A549 (cell line): ENCODE measurements at regions of chr7 and their contacts with region 1.

Region 1: DNA sequence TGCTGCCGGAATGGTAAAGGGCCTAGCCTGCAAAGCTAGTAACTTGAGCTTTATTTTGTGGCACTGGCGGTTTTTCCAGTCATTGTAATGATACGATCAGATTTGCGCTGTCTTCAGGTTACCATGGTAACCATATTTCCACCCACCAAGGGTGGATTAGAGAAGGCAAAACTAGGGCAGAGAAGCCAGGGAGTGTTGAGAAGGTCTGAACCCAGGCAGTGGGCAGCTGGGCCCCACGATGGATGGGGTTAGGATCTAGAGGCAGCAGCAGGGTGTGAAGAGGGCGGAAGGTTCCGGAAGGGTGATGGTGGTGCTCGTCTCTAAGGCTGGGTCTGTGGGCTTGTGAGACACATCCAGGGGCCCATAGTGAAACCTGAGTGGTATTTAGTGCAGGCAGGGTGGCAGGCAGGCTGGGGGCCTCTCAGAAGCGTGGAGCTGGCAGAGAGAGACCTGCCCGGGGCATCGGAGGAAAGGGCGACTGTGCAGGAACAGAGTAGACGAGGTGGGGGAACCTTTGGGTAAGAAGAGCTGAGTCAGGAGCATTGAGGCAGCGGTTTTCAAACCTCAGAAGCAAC is 87.9 kb upstream of the GTF2I start:
- DNase-seq: no peak
- ATAC-seq: no peak
- H3K4me3 ChIP-seq: no peak overlapping the region
- H3K27ac ChIP-seq: peak overlapping the region; percentile 71 to 82
- H3K4me1 ChIP-seq: peaks cover 30% of the 10 kb centered on the region
- CTCF ChIP-seq: no peak
- EP300 ChIP-seq: no peak
- POLR2A ChIP-seq: no peak
- RAD21 ChIP-seq: no peak

Region 2: GRCh38 chr7:74429153-74429747 is 140.3 kb before region 1 on chr7:
- CTCF ChIA-PET with region 1: interaction called, 10 read pairs
- POLR2A ChIA-PET with region 1: no interaction called
- DNase-seq: peak in 1 of 2 experiments; percentile 64
- ATAC-seq: peak; percentile 61 to 67
- H3K4me3 ChIP-seq: no peak overlapping the region
- H3K27ac ChIP-seq: peak overlapping the region; percentile 69 to 80
- H3K4me1 ChIP-seq: peaks cover 21% of the 10 kb centered on the region
- CTCF ChIP-seq: no peak
- EP300 ChIP-seq: no peak
- POLR2A ChIP-seq: no peak
- RAD21 ChIP-seq: no peak

Region 3: DNA sequence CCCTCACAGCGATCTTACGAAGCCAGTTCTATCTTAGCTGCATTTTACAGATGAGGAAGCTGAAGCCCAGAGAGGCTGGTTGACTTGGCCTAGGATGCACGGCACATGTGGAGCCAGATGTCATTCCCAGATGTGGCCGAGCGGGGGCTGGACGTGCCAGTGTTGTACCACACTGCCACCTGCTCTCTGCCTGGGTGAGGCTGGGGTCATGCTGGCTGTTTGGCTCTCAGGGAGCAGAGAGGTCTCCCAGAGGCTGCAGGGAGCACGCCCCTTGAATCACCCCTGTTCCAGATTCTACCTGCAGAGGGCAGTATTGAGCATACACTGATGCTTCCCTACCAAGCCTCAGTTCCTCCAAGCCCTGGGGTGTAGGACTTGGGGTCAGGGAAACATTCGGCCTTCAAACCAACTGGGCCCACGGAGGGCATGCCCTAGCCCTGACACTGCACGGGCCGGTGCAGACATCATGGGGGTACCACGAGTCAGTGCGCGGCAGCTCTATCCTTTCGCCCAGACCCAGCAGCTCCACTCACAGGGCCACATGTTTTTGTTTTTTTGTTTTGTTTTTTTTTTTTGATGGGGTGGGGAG is 119.7 kb before region 1 on chr7:
- CTCF ChIA-PET with region 1: interaction called, 18 read pairs
- POLR2A ChIA-PET with region 1: no interaction called
- DNase-seq: peak; percentile 68 to 76
- ATAC-seq: peak; percentile 56 to 68; a peak in 4 of 6 replicates
- H3K4me3 ChIP-seq: no peak overlapping the region
- H3K27ac ChIP-seq: peak overlapping the region; percentile 30 to 42; a peak in 4 of 6 replicates
- H3K4me1 ChIP-seq: peaks cover 10% of the 10 kb centered on the region
- CTCF ChIP-seq: peak; percentile 70
- EP300 ChIP-seq: no peak
- POLR2A ChIP-seq: no peak
- RAD21 ChIP-seq: peak; percentile 65 to 69

Region 4: DNA sequence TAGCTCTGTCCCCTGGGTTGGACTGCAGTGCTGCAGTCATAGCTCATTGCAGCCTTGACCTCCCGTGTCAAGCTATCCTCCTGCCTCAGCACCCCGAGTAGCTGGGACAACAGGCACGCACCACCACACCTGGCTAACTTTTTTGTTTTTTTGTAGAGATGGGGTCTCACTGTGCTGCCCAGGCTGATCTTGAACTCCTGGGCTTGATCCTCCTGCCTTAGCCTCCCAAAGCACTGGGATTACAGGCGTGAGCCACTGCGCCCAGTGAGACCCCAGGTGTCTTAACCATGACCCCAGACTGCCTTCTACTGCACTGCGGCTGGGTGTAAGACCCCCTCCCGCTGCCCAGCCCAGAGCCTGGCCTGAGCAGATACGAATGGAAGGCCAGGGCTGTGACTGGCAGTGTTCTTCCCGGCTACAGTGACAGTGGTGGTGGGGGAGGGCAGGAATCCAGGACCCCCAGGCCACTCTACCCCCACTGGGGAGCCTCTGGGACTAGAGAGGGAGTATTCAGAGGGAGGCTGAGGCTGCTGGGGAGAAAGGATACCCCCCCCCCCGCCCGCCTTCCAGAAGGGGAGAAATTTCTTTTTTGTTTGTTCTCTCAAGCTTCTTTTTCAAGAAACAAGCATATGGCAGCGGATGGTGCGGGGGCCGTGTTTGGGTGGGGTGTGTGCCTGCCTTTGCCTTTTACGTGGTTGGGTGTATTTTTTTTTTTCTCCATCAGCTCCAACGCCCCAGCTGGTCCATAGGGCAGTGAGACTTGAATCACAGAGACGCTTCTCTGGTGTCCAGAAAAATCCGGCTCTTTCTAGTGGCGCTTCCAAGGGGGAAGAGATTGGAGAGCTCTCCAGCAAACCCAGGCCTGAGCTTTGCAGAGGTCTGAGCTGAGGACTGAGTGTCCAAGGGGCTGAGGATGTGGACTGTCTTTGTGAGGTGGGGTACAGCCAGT is 79.3 kb before region 1 on chr7:
- CTCF ChIA-PET with region 1: interaction called, 11 read pairs
- POLR2A ChIA-PET with region 1: no interaction called
- DNase-seq: no peak
- ATAC-seq: peak; percentile 30 to 41; a peak in 3 of 6 replicates
- H3K4me3 ChIP-seq: no peak overlapping the region
- H3K27ac ChIP-seq: peak overlapping the region in 1 of 2 experiments; percentile 58; a peak in 3 of 6 replicates
- H3K4me1 ChIP-seq: peaks cover 8% of the 10 kb centered on the region; the same call in 2 of the 3 replicates
- CTCF ChIP-seq: no peak
- EP300 ChIP-seq: no peak
- POLR2A ChIP-seq: no peak
- RAD21 ChIP-seq: no peak

Region 5: GRCh38 chr7:74502181-74502891 is 67.3 kb before region 1 on chr7:
- CTCF ChIA-PET with region 1: interaction called, 10 read pairs
- POLR2A ChIA-PET with region 1: no interaction called
- DNase-seq: no peak
- ATAC-seq: no peak; a peak in 1 of 6 replicates
- H3K4me3 ChIP-seq: no peak overlapping the region
- H3K27ac ChIP-seq: peak overlapping the region in 1 of 2 experiments; percentile 58; a peak in 2 of 6 replicates
- H3K4me1 ChIP-seq: peaks cover 11% of the 10 kb centered on the region
- CTCF ChIP-seq: no peak
- EP300 ChIP-seq: no peak
- POLR2A ChIP-seq: no peak
- RAD21 ChIP-seq: no peak

Region 6: GRCh38 chr7:74554178-74554577 is 15.4 kb before region 1 on chr7:
- CTCF ChIA-PET with region 1: interaction called, 28 read pairs
- POLR2A ChIA-PET with region 1: no interaction called
- DNase-seq: no peak
- ATAC-seq: peak; percentile 21 to 26; a peak in 3 of 6 replicates
- H3K4me3 ChIP-seq: no peak overlapping the region
- H3K27ac ChIP-seq: no peak overlapping the region
- H3K4me1 ChIP-seq: no peaks in the 10 kb centered on the region
- CTCF ChIP-seq: no peak
- EP300 ChIP-seq: no peak
- POLR2A ChIP-seq: no peak
- RAD21 ChIP-seq: no peak

Region 7: GRCh38 chr7:74587435-74588126 is 18.0 kb after region 1 on chr7:
- CTCF ChIA-PET with region 1: interaction called, 10 read pairs
- POLR2A ChIA-PET with region 1: no interaction called
- DNase-seq: peak; percentile 88 to 96
- ATAC-seq: peak; percentile 95 to 96
- H3K4me3 ChIP-seq: no peak overlapping the region
- H3K27ac ChIP-seq: peak overlapping the region; percentile 83 to 95
- H3K4me1 ChIP-seq: peaks cover 54% of the 10 kb centered on the region
- CTCF ChIP-seq: no peak
- EP300 ChIP-seq: no peak
- POLR2A ChIP-seq: no peak; the same call in 1 of the 2 replicates
- RAD21 ChIP-seq: no peak; a peak in 1 of 5 replicates

Region 8: DNA sequence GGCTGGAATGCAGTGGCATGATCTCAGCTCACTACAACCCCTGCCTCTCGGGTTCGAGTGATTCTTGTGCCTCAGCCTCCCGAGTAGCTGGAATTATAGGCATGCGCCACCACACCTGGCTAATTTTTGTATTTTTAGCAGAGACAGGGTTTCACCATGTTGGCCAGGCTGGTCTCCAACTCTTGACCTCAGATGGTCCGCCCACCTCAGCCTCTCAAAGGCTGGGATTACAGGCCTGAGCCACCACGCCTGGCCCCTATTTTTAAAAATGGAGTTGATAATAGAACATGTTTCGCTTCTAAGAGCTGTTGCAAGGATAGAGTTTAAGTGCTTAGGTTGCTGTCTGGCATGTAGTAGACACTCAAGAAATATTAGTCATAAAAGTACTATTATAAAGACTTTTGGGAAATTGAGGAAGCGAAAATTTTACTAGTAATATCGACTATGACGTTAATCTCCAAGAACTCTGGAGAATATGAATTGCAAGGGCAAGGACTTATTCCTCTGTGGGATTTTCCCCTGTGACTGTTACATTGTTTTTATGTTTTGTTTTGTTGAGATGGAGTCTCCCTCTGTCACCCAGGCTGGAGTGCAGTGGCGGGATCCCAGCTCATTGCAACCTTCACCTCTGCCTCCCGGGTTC is 95.8 kb after region 1 on chr7:
- CTCF ChIA-PET with region 1: no interaction called
- POLR2A ChIA-PET with region 1: no interaction called
- DNase-seq: no peak
- ATAC-seq: no peak
- H3K4me3 ChIP-seq: no peak overlapping the region
- H3K27ac ChIP-seq: no peak overlapping the region
- H3K4me1 ChIP-seq: peaks cover 33% of the 10 kb centered on the region
- CTCF ChIP-seq: no peak
- EP300 ChIP-seq: no peak
- POLR2A ChIP-seq: no peak
- RAD21 ChIP-seq: no peak